Activated T-helper 1 cell treated with anti-CD3 and anti-CD28 coated beads, Interleukin-12 subunit alpha, Interleukin-12 subunit beta, Interleukin-2, Interleukin-4 antibody, amounts not matched to agents 30 ng/mL and 10 ng/mL and 1 ng/mL, durations not matched to agents 14 hours and 24 hours and 36 hours (primary cell): ENCODE measurements at regions of chr1 and their contacts with region 1.

Region 1: DNA sequence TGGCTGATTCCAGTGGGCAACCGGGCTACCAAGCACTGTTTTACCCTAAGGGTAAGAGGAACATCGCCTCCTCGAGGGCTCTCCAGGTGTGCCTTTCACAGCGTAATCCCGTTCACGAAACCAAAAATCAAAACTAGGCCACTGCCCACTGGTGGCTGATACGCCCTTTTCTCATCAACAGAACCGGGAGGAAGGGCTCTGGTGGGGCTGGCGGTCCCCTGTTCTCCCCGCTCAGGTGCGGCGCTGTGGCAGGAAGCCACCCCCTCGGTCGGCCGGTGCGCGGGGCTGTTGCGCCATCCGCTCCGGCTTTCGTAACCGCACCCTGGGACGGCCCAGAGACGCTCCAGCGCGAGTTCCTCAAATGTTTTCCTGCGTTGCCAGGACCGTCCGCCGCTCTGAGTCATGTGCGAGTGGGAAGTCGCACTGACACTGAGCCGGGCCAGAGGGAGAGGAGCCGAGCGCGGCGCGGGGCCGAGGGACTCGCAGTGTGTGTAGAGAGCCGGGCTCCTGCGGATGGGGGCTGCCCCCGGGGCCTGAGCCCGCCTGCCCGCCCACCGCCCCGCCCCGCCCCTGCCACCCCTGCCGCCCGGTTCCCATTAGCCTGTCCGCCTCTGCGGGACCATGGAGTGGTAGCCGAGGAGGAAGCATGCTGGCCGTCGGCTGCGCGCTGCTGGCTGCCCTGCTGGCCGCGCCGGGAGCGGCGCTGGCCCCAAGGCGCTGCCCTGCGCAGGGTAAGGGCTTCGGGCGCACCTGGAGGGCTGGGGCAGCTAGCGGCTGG is at the start of gene IL6R:
- DNase-seq: peak; percentile 62
- H3K4me3 Mint-ChIP-seq: peak within 1 kb of the TSS; percentile 86
- H3K27ac Mint-ChIP-seq: peak within 1 kb of the TSS; percentile 77
- H3K4me1 Mint-ChIP-seq: peaks cover 73% of the 10 kb centered on the region
- H3K27me3 Mint-ChIP-seq: no peaks in the 10 kb centered on the region
- total RNA-seq, gene IL6R: 4.9 and 5.0 TPM in 2 replicates

Region 2: GRCh38 chr1:154272217-154272998 is 132.8 kb before region 1 on chr1 and contains the start of gene HAX1:
- intact Hi-C with region 1: loop called (anchors 5 kb)
- DNase-seq: peak; percentile 94
- H3K4me3 Mint-ChIP-seq: peak within 1 kb of the TSS; percentile 98
- H3K27ac Mint-ChIP-seq: peak within 1 kb of the TSS; percentile 97
- H3K4me1 Mint-ChIP-seq: peaks cover 46% of the 10 kb centered on the region
- H3K27me3 Mint-ChIP-seq: no peaks in the 10 kb centered on the region
- total RNA-seq, gene HAX1: 122 and 123 TPM in 2 replicates

Region 3: GRCh38 chr1:154352581-154353459 is 52.4 kb before region 1 on chr1:
- intact Hi-C with region 1: loop called (anchors 1 kb)
- DNase-seq: no peak
- H3K4me3 Mint-ChIP-seq: peak overlapping the region; percentile 77
- H3K27ac Mint-ChIP-seq: peak overlapping the region; percentile 29
- H3K4me1 Mint-ChIP-seq: peaks cover 22% of the 10 kb centered on the region
- H3K27me3 Mint-ChIP-seq: peaks cover 5% of the 10 kb centered on the region

Region 4: DNA sequence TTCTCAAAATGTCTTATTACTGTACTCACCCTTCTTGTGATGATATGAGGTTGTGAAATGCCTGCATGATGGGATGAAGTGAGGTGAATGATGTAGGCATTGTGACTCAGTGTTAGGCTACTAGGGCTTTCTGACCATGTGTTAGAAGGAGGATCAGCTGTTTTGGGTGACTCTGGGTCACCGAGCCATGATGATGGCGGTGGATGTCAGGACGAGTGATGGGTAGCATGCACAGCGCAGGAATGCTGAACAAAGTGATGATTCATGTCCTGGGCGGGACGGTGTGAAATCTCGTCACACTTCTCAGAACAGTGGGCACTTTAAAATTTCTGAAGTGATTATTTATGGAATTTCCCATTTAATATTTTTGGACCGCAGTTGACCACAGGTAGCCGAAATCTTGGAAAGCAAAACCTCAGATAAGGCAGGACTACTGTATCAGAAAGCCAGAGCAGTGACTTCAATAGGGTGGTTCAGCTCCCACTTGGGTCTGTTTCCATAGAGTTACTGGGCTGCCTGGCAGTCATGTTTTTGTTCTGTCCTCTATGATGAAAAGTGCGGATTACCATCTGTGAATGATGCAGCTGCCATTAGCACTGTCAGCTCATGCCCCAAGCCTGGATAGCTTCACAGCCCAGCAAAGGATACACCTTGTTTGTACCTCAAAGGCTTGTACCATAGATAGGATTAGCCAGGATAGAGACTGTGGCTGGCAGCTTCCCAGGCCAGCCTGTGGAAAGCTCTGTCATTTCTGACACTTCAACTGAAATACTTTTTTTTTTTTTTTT is 26.6 kb after region 1 on chr1:
- intact Hi-C with region 1: loop called (anchors 1 kb)
- DNase-seq: no peak
- H3K4me3 Mint-ChIP-seq: no peak overlapping the region
- H3K27ac Mint-ChIP-seq: peak overlapping the region; percentile 72
- H3K4me1 Mint-ChIP-seq: peaks cover 28% of the 10 kb centered on the region
- H3K27me3 Mint-ChIP-seq: no peaks in the 10 kb centered on the region

Region 5: GRCh38 chr1:154463512-154463990 is 58.4 kb after region 1 on chr1:
- intact Hi-C with region 1: loop called (anchors 1 kb)
- DNase-seq: peak; percentile 67
- H3K4me3 Mint-ChIP-seq: peak overlapping the region; percentile 58
- H3K27ac Mint-ChIP-seq: peak overlapping the region; percentile 81
- H3K4me1 Mint-ChIP-seq: peaks cover 65% of the 10 kb centered on the region
- H3K27me3 Mint-ChIP-seq: peaks cover 3% of the 10 kb centered on the region